PC-9 (cell line): ENCODE measurements at regions of chr9 and their contacts with region 1.

Region 1: DNA sequence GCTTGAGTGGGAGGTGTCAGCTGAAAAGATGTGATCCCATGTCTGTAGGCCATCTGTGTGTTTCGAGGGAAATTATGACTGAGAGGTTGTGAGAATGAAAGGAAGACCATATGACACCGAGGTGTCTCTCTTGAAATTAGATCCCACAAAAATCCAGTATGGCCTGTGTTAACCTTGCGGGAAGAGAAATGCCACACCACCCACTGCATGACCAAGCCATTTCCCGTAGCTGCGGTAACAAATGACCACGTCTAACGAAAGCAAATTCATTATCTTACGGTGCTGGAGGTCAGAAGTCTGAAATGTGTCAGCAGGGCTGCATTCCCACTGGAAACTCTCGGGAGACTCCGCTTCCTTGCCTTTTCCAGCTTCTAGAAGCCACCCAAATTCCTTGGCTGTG is 11.6 kb downstream of the C9orf57 start:
- DNase-seq: no peak
- H3K4me3 ChIP-seq: no peak overlapping the region
- H3K27ac ChIP-seq: no peak overlapping the region
- H3K4me1 ChIP-seq: no peaks in the 10 kb centered on the region
- H3K27me3 ChIP-seq: no peaks in the 10 kb centered on the region
- CTCF ChIP-seq: no peak

Region 2: GRCh38 chr9:72065076-72065475 is 16.2 kb after region 1 on chr9:
- CTCF ChIA-PET with region 1: no interaction called
- POLR2A ChIA-PET with region 1: no interaction called
- intact Hi-C with region 1: no loop called
- DNase-seq: no peak
- H3K4me3 ChIP-seq: no peak overlapping the region
- H3K27ac ChIP-seq: no peak overlapping the region
- H3K4me1 ChIP-seq: no peaks in the 10 kb centered on the region
- H3K27me3 ChIP-seq: no peaks in the 10 kb centered on the region
- CTCF ChIP-seq: no peak

Region 3: GRCh38 chr9:72210522-72210921 is 161.7 kb after region 1 on chr9:
- CTCF ChIA-PET with region 1: no interaction called
- POLR2A ChIA-PET with region 1: interaction called, 10 read pairs
- intact Hi-C with region 1: no loop called
- DNase-seq: no peak
- H3K4me3 ChIP-seq: no peak overlapping the region
- H3K27ac ChIP-seq: no peak overlapping the region
- H3K4me1 ChIP-seq: no peaks in the 10 kb centered on the region
- H3K27me3 ChIP-seq: no peaks in the 10 kb centered on the region
- CTCF ChIP-seq: no peak